Naive thymus-derived CD4-positive, alpha-beta T cell (primary cell): ENCODE measurements at regions of chr13 and their contacts with region 1.

Region 1: DNA sequence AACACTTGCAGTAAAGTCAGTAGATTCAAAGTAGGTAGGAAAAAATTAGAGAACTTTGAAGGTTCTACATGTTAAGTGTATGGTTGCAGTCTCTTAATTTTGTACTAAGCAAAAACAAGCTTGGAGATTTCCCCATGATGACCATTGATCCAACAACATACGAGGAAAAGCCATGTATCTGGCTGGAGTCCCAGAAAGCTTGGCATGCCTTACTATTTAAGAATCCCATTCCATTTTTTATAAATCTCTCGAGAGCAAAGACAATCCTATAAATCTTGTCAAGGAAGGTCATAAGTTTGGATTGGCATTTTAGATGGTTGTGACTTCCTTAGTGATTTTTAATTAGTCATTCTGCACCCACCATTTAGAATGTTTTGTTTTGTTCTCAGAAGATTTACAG is 495.9 kb downstream of the GPC5 start:
- DNase-seq: no peak
- ATAC-seq: no peak
- H3K4me3 ChIP-seq: no peak overlapping the region
- H3K4me3 Mint-ChIP-seq: no peak overlapping the region
- H3K27ac ChIP-seq: no peak overlapping the region
- H3K27ac Mint-ChIP-seq: no peak overlapping the region
- H3K4me1 ChIP-seq: no peaks in the 10 kb centered on the region
- H3K4me1 Mint-ChIP-seq: no peaks in the 10 kb centered on the region
- H3K27me3 ChIP-seq: no peaks in the 10 kb centered on the region
- H3K27me3 Mint-ChIP-seq: no peaks in the 10 kb centered on the region

Region 2: DNA sequence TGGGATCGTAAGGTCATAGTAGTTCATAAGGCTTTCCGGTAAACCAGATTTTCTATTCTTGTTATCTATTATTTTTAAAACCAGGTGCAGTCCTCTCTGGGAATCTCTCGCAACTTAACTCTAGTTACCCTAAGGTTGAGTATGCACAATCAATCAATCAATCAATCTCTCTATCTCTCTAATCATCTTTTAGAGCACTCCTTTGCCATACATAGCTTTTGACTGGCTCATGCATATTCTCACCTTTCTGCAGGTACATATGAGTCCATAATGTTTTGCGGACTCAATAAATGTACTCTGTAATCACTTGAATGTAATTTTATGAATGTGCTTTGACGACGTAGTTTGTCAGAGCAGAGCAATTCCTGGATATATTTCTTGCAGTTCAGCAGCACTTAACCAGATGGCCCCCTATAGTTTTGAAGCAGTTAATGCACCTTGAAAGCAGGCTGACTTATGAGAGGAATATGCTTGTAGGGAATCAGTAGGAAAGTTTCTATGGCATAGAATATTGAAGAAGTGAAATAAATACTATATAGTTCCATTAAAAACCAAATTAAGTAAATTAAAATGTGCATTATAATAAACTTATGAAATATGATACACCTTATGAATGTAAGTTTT is 28.8 kb after region 1 on chr13:
- CTCF ChIA-PET with region 1: no interaction called
- POLR2A ChIA-PET with region 1: no interaction called
- intact Hi-C with region 1: loop called in 1 of 2 experiments (anchors 1 kb)
- DNase-seq: no peak
- ATAC-seq: no peak
- H3K4me3 ChIP-seq: no peak overlapping the region
- H3K4me3 Mint-ChIP-seq: no peak overlapping the region
- H3K27ac ChIP-seq: no peak overlapping the region
- H3K27ac Mint-ChIP-seq: no peak overlapping the region
- H3K4me1 ChIP-seq: no peaks in the 10 kb centered on the region
- H3K4me1 Mint-ChIP-seq: no peaks in the 10 kb centered on the region
- H3K27me3 ChIP-seq: no peaks in the 10 kb centered on the region
- H3K27me3 Mint-ChIP-seq: no peaks in the 10 kb centered on the region